Transverse colon (tissue), 4 donors: ENCODE measurements at regions of chr5 and their contacts with region 1.

Region 1: GRCh38 chr5:97788369-97788768 is 605.3 kb upstream of the RIOK2 start:
- DNase-seq: no peak
- H3K4me3 ChIP-seq: no peak overlapping the region
- H3K27ac ChIP-seq: no peak overlapping the region
- H3K4me1 ChIP-seq: no peaks in the 10 kb centered on the region
- H3K27me3 ChIP-seq: no peaks in the 10 kb centered on the region
- CTCF ChIP-seq: no peak
- EP300 ChIP-seq: no peak
- POLR2A ChIP-seq: no peak

Region 2: DNA sequence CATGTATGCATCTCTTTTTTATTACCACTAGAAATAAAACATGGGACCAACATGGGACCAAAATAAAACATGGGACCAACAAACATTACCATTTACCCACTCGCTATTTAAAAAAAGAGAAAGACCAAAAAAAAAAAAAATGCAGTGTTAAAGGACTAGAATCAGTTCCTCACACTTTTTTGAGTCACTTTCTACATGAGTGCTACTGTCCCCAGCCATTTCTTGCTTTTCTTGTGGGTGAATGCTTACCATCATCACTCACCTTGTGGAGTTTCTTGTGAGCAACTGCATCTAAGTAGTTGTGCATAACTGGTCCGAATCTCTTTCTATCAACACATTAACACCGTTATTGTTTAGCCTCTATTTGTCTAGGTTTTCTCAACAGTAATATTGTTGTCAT is 111.8 kb before region 1 on chr5:
- in situ Hi-C with region 1: no loop called
- intact Hi-C with region 1: loop called (anchors 5 kb)
- DNase-seq: no peak
- H3K4me3 ChIP-seq: no peak overlapping the region
- H3K27ac ChIP-seq: no peak overlapping the region
- H3K4me1 ChIP-seq: no peaks in the 10 kb centered on the region
- H3K27me3 ChIP-seq: no peaks in the 10 kb centered on the region
- CTCF ChIP-seq: no peak
- EP300 ChIP-seq: no peak
- POLR2A ChIP-seq: no peak